Naive thymus-derived CD8-positive, alpha-beta T cell (primary cell): ENCODE measurements at regions of chr7 and their contacts with region 1.

Region 1: GRCh38 chr7:150448789-150449147 is 1.7 kb upstream of the GIMAP8 start:
- DNase-seq: peak; percentile 71 to 93 (median 86)
- ATAC-seq: peak; percentile 22 to 44
- H3K4me3 Mint-ChIP-seq: peak overlapping the region; percentile 95 to 100 (median 99)
- H3K27ac Mint-ChIP-seq: peak overlapping the region; percentile 91 to 99 (median 97)
- H3K4me1 Mint-ChIP-seq: peaks cover 42 to 67% (median 52%) of the 10 kb centered on the region in 4 donors
- H3K27me3 Mint-ChIP-seq: no peaks in the 10 kb centered on the region

Region 2: GRCh38 chr7:150420987-150421674 is 27.6 kb before region 1 on chr7:
- POLR2A ChIA-PET with region 1: no interaction called
- DNase-seq: peak; percentile 67 to 91 (median 84)
- ATAC-seq: peak; percentile 100
- H3K4me3 Mint-ChIP-seq: peak overlapping the region in 9 of 10 donors; percentile 16 to 64 (median 35)
- H3K27ac Mint-ChIP-seq: peak overlapping the region in 7 of 10 donors; percentile 20 to 76 (median 42)
- H3K4me1 Mint-ChIP-seq: peaks cover 6 to 11% (median 7%) of the 10 kb centered on the region in 4 donors
- H3K27me3 Mint-ChIP-seq: peaks cover 0 to 1% (median 0%) of the 10 kb centered on the region in 5 donors

Region 3: DNA sequence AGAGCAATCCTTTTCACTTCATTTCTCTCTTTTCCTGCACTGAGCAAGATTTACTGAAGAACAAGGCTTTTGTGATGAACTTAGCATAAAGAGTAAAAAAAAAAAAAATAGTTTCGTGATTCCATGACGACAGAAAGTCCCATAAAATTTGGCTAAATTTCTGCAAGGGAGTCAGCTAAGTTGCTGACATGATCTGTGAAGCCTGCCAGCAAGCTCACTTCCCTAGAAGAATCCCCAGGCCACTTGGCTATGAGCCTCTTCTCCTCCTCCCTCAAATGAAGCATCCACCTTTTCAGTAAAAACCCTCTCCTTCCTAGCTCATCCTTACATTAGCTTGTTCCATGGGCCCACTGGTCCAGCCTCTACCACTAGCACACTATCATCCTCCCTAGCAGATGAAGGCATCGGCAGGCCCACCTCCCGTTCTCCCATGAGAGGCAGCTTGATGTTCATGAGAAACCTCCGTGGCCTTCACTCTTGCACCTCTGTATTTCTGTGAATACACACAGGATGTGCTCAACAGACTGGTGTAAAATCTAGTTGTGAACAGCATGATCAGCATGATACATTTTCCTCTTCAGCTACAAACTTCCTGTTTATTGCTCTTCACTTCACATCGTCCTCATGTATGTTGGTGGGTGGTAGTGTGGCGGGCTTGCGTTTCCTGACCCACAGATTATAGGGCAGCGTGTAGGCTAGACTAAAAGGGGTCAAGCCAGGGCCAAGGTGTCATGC is 32.6 kb after region 1 on chr7:
- POLR2A ChIA-PET with region 1: interaction called, 505 read pairs
- DNase-seq: peak; percentile 25 to 76 (median 63)
- ATAC-seq: peak; percentile 51 to 69
- H3K4me3 Mint-ChIP-seq: peak overlapping the region; percentile 71 to 97 (median 88)
- H3K27ac Mint-ChIP-seq: peak overlapping the region; percentile 98 to 100 (median 100)
- H3K4me1 Mint-ChIP-seq: peaks cover 57 to 98% (median 94%) of the 10 kb centered on the region in 4 donors
- H3K27me3 Mint-ChIP-seq: no peaks in the 10 kb centered on the region

Region 4: DNA sequence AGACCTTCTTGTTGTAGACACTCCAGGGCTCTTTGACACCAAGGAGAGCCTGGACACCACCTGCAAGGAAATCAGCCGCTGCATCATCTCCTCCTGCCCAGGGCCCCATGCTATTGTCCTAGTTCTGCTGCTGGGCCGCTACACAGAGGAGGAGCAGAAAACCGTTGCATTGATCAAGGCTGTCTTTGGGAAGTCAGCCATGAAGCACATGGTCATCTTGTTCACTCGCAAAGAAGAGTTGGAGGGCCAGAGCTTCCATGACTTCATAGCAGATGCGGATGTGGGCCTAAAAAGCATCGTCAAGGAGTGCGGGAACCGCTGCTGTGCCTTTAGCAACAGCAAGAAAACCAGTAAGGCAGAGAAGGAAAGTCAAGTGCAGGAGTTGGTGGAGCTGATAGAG is 71.4 kb after region 1 on chr7:
- POLR2A ChIA-PET with region 1: interaction called, 812 read pairs
- DNase-seq: peak in 4 of 10 donors; percentile 27 to 70 (median 36)
- ATAC-seq: peak; percentile 19 to 26
- H3K4me3 Mint-ChIP-seq: peak overlapping the region; percentile 91 to 100 (median 99)
- H3K27ac Mint-ChIP-seq: peak overlapping the region; percentile 87 to 99 (median 94)
- H3K4me1 Mint-ChIP-seq: peaks cover 16 to 43% (median 35%) of the 10 kb centered on the region in 4 donors
- H3K27me3 Mint-ChIP-seq: no peaks in the 10 kb centered on the region

Region 5: DNA sequence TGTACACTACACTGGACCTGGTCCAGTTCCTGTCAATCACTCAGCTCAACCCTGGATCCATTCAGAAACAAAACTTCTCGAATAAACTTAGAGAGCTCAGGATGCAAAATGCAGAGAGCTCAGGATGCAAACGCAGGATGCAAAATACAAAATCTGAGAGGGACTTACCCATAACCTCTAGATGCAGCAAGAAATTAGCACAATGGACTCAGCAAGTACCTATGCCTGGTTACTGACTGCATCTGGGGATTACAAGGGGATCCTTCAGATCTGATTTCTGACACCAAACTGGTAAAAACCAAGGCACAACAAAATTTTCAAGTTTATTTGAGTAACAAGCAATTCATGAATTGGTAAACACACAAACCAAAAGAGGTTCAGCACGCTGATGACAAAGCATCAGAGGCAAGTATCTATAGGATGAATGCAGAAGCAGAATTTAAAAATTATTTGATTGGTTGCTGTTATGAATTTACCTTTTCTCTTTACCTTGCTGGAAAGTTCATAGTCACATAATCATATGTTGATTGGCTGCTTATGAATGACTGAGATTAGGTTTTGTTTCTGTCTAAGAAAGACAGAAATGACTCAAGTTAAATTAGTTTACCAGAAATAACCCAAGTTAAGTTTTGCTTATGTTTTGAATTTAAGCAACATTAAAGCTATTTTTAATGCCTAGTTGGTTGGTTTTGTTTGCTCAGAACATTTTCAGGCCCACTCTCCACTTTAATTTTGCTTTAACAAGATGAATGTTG is 172.0 kb after region 1 on chr7:
- POLR2A ChIA-PET with region 1: interaction called, 18 read pairs
- DNase-seq: no peak
- ATAC-seq: peak; percentile 39 to 49
- H3K4me3 Mint-ChIP-seq: peak overlapping the region in 7 of 10 donors; percentile 16 to 56 (median 52)
- H3K27ac Mint-ChIP-seq: peak overlapping the region; percentile 42 to 90 (median 86)
- H3K4me1 Mint-ChIP-seq: peaks cover 21 to 70% (median 56%) of the 10 kb centered on the region in 4 donors
- H3K27me3 Mint-ChIP-seq: no peaks in the 10 kb centered on the region

Region 6: DNA sequence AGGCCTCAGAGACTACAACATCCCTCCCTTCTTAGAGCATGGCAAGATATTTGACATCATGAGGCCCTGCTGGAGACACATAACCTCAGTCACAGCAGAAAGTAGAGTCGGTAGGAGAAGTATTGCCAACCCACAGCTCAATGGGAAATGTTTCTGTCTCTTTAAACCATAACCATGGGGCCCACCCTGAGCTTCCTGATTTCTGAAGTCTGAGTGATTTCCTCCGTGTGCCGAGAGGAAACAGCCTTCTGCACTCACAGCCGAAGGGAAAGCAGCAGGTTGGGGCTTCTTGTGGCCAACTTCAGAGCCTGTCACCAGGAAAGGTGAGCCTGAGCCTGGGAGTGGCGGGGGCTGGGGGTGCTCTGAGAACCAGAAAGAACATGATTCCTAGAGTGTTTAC is 267.6 kb after region 1 on chr7 and contains the start of gene GIMAP1:
- POLR2A ChIA-PET with region 1: interaction called, 175 read pairs
- DNase-seq: peak; percentile 39 to 85 (median 68)
- ATAC-seq: peak; percentile 81 to 91
- H3K4me3 Mint-ChIP-seq: peak within 1 kb of the TSS; percentile 92 to 100 (median 97)
- H3K27ac Mint-ChIP-seq: peak within 1 kb of the TSS; percentile 89 to 99 (median 98)
- H3K4me1 Mint-ChIP-seq: peaks cover 40 to 69% (median 66%) of the 10 kb centered on the region in 4 donors
- H3K27me3 Mint-ChIP-seq: no peaks in the 10 kb centered on the region
- polyA plus RNA-seq, gene GIMAP1: 48.0 to 87.4 (median 67.1) TPM